SK-N-SH (cell line): ENCODE measurements at regions of chr6 and their contacts with region 1.

Region 1: DNA sequence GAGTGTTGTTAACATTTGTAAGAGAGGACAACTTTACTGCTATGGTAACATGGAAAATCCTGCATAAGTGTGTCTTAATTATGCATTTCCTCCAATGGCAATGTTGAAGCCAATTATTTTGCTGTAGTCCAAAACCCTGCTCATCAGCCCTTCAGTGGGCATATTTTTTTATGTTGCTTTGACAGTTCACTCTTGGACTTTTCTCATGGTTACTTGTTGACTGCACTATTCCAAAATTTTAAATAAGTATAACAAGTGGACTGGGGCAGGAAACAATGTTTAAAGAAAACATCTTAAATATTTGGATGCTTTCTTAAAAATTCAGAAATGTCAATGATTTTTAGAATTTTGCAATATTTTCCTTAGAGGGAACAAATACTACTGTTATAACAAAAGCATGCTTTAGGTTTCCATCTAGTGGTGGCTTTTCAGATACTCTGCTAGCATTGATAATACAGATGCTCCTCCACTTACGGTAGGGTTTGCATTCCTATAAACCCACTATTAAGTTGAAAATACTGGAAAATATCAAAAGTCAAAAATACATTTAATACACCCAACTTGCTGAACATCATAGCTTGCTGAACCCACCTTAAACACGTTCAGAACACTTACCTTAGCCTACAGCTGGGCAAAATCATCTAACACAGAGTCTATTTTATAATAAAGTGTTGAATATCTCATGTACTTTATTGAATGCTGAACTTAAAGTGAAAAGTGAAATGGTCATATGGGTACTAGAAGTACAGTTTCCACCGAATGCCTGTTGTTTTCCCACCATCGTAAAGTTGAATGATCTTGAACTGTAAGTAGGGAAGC is 86.4 kb downstream of the ADGRG6 start:
- DNase-seq: peak; percentile 15
- H3K4me3 ChIP-seq: no peak overlapping the region; a peak in 1 of 4 replicates
- H3K27ac ChIP-seq: peak overlapping the region; percentile 81 to 99
- H3K4me1 ChIP-seq: peaks cover 0 to 22% of the 10 kb centered on the region in 2 experiments; a peak in 2 of 4 replicates
- H3K27me3 ChIP-seq: no peaks in the 10 kb centered on the region
- CTCF ChIP-seq: peak; percentile 76
- EP300 ChIP-seq: no peak
- RAD21 ChIP-seq: peak; percentile 65

Region 2: GRCh38 chr6:142146828-142147662 is 241.2 kb before region 1 on chr6 and contains the starts of genes NMBR and VTA1:
- CTCF ChIA-PET with region 1: interaction called, 14 read pairs
- POLR2A ChIA-PET with region 1: no interaction called
- DNase-seq: peak; percentile 79
- H3K4me3 ChIP-seq: peak within 1 kb of the TSS; percentile 94 to 98
- H3K27ac ChIP-seq: peak within 1 kb of the TSS; percentile 63 to 76
- H3K4me1 ChIP-seq: peaks cover 8 to 10% of the 10 kb centered on the region in 2 experiments; a peak in 3 of 4 replicates
- H3K27me3 ChIP-seq: no peaks in the 10 kb centered on the region
- CTCF ChIP-seq: peak; percentile 93
- EP300 ChIP-seq: peak; percentile 22 to 45; a peak in 1 of 4 replicates
- RAD21 ChIP-seq: peak; percentile 84
- polyA plus RNA-seq, gene NMBR: not detected in 2 replicates
- polyA plus RNA-seq, gene VTA1: 60.1 and 84.3 TPM in 2 replicates

Region 3: DNA sequence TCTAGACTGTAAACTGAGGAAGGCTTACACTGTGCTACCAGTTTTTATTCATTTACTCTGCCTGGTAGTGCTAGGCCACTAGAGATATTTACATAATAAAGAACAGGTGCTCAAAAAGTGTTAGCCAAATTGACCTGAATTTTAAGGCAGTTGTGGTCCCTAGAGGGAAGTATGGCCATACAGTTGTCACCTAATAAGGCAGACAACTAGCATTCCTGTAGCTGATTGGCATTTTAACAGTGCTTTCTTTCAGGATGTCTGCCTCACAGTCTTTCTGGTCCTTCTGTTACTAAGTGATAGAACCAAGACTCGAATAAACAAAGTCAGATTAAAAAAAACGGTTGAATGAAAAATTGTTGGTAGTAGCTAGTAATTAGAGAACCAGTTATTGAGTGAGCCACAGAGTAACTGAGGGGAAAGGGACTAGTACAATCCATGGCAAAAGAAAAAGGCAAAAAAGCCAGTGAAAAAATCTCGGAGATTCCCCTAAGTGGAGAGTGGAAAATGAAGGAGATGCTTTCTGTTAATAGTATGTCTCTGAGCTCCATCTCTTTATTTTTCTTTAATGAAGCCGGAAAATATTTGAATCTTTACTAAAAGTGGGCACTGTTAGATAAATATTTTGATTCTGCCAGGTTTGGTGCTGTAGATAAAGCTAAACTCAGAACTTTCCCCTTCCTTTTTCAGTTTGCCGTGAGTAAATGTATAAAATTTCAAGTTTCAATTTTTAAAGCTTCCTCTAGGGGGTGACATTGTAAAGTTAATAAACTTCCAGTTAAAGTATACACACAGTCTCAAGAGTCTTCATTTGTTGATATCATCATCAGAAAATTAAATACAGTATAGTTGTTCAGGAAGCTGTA is 232.1 kb before region 1 on chr6:
- CTCF ChIA-PET with region 1: interaction called, 16 read pairs
- POLR2A ChIA-PET with region 1: no interaction called
- DNase-seq: peak; percentile 10
- H3K4me3 ChIP-seq: no peak overlapping the region
- H3K27ac ChIP-seq: peak overlapping the region; percentile 43 to 44; a peak in 3 of 4 replicates
- H3K4me1 ChIP-seq: no peaks in the 10 kb centered on the region; a peak in 3 of 4 replicates
- H3K27me3 ChIP-seq: no peaks in the 10 kb centered on the region
- CTCF ChIP-seq: peak; percentile 64
- EP300 ChIP-seq: no peak
- RAD21 ChIP-seq: peak; percentile 57

Region 4: GRCh38 chr6:142235272-142235671 is 152.9 kb before region 1 on chr6:
- CTCF ChIA-PET with region 1: no interaction called
- POLR2A ChIA-PET with region 1: no interaction called
- DNase-seq: no peak
- H3K4me3 ChIP-seq: no peak overlapping the region
- H3K27ac ChIP-seq: peak overlapping the region in 1 of 2 experiments; percentile 43; a peak in 1 of 4 replicates
- H3K4me1 ChIP-seq: no peaks in the 10 kb centered on the region; a peak in 2 of 4 replicates
- H3K27me3 ChIP-seq: no peaks in the 10 kb centered on the region
- CTCF ChIP-seq: no peak
- EP300 ChIP-seq: no peak
- RAD21 ChIP-seq: no peak